ENCODE measurements at regions of chr7 and their contacts with region 1.

Region 1: GRCh38 chr7:51187941-51188340 is 128.7 kb downstream of the COBL start:
- DNase-seq: no peak
- ATAC-seq: peak; percentile 63

Region 2: GRCh38 chr7:51366930-51367613 is 179.1 kb after region 1 on chr7:
- intact Hi-C with region 1: loop called (anchors 10 kb)
- DNase-seq: no peak
- ATAC-seq: peak; percentile 86

Measured in sciatic nerve (tissue), 2 donors.